HepG2 (cell line): ENCODE measurements at regions of chr6 and their contacts with region 1.

Region 1: GRCh38 chr6:163627274-163628062 is 212.9 kb downstream of the QKI start:
- DNase-seq: no peak
- ATAC-seq: no peak
- H3K4me3 ChIP-seq: no peak overlapping the region
- H3K27ac ChIP-seq: no peak overlapping the region
- H3K4me1 ChIP-seq: no peaks in the 10 kb centered on the region
- H3K27me3 ChIP-seq: no peaks in the 10 kb centered on the region; a peak in 1 of 5 replicates
- CTCF ChIP-seq: no peak
- EP300 ChIP-seq: no peak
- POLR2A ChIP-seq: no peak
- RAD21 ChIP-seq: no peak

Region 2: DNA sequence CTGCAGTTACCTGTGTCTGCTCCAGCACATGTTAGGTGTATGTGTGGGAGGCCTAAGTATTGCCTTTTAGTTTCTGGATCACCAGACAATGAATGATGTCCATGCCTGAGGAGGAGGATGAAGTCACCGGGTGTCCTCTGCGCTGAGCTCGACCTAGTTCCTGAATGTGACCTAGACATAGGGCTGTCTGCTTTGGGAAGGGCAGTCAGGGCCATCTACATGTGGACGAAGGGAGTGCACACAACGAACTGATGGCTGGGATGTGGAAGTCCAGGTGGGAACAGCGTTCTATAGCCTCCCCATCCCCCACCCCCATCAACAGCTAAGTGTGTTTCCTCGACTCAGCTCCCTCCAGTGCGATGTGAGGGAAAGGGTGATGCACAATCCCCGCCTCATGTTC is 26.7 kb before region 1 on chr6:
- CTCF ChIA-PET with region 1: no interaction called
- POLR2A ChIA-PET with region 1: no interaction called
- in situ Hi-C with region 1: no loop called
- intact Hi-C with region 1: loop called (anchors 1 kb)
- DNase-seq: no peak
- ATAC-seq: peak; percentile 67
- H3K4me3 ChIP-seq: no peak overlapping the region
- H3K27ac ChIP-seq: no peak overlapping the region
- H3K4me1 ChIP-seq: peaks cover 7% of the 10 kb centered on the region
- H3K27me3 ChIP-seq: 0 out of 5 replicates have a peak, but pooled peaks cover 0 to 4% of the 10 kb centered on the region in 2 experiments
- CTCF ChIP-seq: no peak
- EP300 ChIP-seq: no peak
- POLR2A ChIP-seq: no peak
- RAD21 ChIP-seq: no peak